Posterior vena cava (tissue), 2 donors: ENCODE measurements at regions of chr2 and their contacts with region 1.

Region 1: GRCh38 chr2:2619995-2620394 is 288.9 kb upstream of the MYT1L start:
- DNase-seq: no peak

Region 2: DNA sequence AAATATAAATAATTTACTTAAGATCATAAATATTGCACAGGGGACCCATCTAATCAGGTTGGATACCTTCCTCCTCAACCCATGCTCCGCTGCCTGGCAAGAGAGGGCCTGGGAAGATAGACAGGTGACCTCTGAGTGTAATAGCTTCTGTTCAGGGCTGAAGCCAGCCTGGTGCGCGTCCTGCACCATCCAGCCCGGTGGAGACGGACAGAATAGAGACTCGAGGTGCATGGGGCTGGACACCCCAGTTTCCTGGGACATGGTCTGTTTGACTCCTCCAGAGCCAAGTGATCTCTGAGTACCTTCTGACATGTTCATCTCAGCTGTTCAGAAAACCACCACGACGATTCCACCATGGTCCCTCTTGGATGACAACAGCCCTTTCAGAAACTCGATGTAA is 79.6 kb before region 1 on chr2:
- intact Hi-C with region 1: loop called in 1 of 2 experiments (anchors 2 kb)
- DNase-seq: peak; percentile 26